Activated naive CD8-positive, alpha-beta T cell treated with anti-CD3 and anti-CD28 coated beads, Interleukin-2, amount 10 ng/mL, durations not matched to agents 7 days and 5 days (primary cell): ENCODE measurements at regions of chr9 and their contacts with region 1.

Region 1: DNA sequence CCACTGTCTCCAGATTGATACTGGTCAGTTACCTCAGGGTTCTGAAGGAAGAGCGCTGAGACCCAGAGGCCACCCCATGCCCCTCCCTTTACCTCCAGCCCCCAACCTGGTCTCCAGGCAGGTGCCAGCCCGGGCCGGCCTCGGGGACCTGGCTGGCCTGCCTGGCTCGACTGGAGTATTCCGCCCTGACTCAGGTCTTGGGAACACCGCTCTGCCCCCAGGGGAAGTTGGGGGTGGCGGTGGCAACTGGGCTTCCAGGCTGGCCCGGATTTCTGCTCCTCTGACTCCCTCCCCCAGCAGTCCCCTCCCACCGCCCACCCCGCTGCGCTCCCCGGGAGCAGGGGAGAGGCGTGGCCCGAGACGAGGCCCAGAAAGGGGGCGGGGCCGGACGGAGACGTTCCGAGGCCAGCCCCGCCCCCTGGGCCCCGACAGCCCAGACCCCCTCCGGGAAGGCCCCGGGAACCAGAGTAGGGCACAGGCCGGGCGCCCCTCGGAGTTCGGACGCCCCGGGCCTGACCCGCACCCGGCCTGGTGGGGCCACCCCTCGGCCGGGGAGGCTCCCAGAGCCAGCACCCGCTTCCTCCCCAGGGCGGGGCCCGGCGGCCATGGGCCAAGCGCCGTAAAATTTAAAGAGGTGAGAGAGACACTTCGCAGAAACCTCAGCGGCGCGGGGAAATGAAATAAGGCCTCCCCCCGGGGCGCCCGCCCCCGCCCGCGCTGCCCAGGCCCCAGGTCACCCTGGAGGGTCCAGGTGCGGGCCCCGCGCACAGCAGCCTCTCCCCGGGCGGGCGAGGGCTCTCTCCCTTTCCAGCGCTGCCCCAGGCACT is 82.4 kb upstream of the ZBTB43 start:
- DNase-seq: peak; percentile 95
- ATAC-seq: peak; percentile 47
- H3K4me3 Mint-ChIP-seq: peak overlapping the region; percentile 94
- H3K27ac Mint-ChIP-seq: peak overlapping the region; percentile 98
- H3K4me1 Mint-ChIP-seq: peaks cover 38% of the 10 kb centered on the region
- H3K27me3 Mint-ChIP-seq: peaks cover 6% of the 10 kb centered on the region

Region 2: GRCh38 chr9:126704873-126705766 is 17.3 kb before region 1 on chr9:
- POLR2A ChIA-PET with region 1: interaction called, 40 read pairs
- DNase-seq: peak; percentile 91
- ATAC-seq: peak; percentile 64
- H3K4me3 Mint-ChIP-seq: peak overlapping the region; percentile 53
- H3K27ac Mint-ChIP-seq: peak overlapping the region; percentile 2
- H3K4me1 Mint-ChIP-seq: peaks cover 11% of the 10 kb centered on the region
- H3K27me3 Mint-ChIP-seq: peaks cover 28% of the 10 kb centered on the region

Region 3: DNA sequence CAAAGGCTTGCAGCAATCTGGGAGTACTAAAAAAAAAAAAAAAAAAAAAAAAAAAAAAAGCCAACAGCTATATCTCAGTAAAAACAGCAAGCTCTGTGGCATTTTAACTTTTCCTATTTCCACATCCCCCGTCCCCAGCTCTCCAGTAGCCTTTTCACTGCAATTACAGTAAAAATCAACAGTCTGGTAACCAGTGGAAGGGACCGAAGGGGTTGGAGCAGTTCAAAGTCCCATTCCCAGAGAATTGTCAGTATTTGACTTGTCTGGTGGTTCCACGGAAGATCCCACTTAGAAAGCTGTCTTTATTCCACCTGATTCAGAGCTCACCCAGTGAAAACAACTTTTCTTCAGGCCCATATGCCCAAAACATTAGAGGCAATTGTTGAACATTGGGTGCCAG is 10.5 kb after region 1 on chr9:
- POLR2A ChIA-PET with region 1: interaction called, 30 read pairs
- DNase-seq: no peak
- ATAC-seq: no peak
- H3K4me3 Mint-ChIP-seq: no peak overlapping the region
- H3K27ac Mint-ChIP-seq: no peak overlapping the region
- H3K4me1 Mint-ChIP-seq: no peaks in the 10 kb centered on the region
- H3K27me3 Mint-ChIP-seq: peaks cover 21% of the 10 kb centered on the region

Region 4: DNA sequence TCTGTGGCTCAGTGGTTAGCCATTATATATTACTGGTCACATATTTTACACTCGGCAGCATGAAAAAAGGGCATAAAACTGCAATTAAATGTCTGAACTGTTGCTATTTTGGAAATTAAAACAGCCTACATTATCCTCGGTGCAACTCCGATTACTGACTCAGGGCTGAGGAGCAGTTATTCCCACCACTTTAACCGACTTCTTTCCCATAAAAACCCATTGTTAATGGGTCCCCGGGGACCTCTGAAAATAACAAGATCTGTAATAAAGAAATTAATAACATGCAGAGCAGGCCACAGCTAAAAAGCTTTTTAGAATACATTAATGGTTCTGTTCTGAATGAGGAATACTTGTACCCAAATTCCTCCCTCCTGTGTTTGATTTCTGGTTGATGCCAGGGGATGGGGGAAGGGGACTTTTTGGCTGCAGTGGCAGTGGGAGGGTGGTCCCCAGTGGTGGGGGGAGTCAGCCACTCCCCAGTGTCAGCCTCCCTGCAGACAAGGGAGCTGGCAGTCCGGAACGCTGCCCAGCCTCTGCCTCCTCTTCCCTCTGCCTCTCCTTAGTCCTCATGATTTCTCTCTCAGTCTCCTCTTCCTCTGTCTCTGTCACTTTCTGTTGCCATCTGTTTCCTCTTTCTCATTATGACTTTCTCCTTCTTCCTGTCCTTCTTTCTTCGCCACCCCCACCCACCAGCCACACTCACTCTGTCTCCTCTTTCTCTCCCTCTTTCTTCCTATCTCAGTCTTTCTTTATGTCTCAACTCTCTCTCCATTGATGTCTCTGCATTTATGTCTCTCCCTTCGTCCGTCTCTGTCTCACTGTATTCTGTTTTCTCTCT is 23.3 kb after region 1 on chr9:
- POLR2A ChIA-PET with region 1: interaction called, 53 read pairs
- DNase-seq: no peak
- ATAC-seq: peak; percentile 61
- H3K4me3 Mint-ChIP-seq: peak overlapping the region; percentile 63
- H3K27ac Mint-ChIP-seq: peak overlapping the region; percentile 92
- H3K4me1 Mint-ChIP-seq: peaks cover 39% of the 10 kb centered on the region
- H3K27me3 Mint-ChIP-seq: peaks cover 10% of the 10 kb centered on the region

Region 5: GRCh38 chr9:126752376-126752775 is 29.9 kb after region 1 on chr9:
- POLR2A ChIA-PET with region 1: interaction called, 53 read pairs
- DNase-seq: no peak
- ATAC-seq: no peak
- H3K4me3 Mint-ChIP-seq: no peak overlapping the region
- H3K27ac Mint-ChIP-seq: no peak overlapping the region
- H3K4me1 Mint-ChIP-seq: peaks cover 20% of the 10 kb centered on the region
- H3K27me3 Mint-ChIP-seq: peaks cover 10% of the 10 kb centered on the region

Region 6: GRCh38 chr9:126804696-126805545 is 82.5 kb after region 1 on chr9 and contains the start of gene ZBTB43:
- POLR2A ChIA-PET with region 1: interaction called, 10 read pairs
- DNase-seq: peak; percentile 98
- ATAC-seq: peak; percentile 86
- H3K4me3 Mint-ChIP-seq: peak within 1 kb of the TSS; percentile 97
- H3K27ac Mint-ChIP-seq: peak within 1 kb of the TSS; percentile 98
- H3K4me1 Mint-ChIP-seq: peaks cover 28% of the 10 kb centered on the region
- H3K27me3 Mint-ChIP-seq: no peaks in the 10 kb centered on the region
- total RNA-seq, gene ZBTB43: 23.0 to 29.4 TPM